CD4-positive, alpha-beta memory T cell (primary cell): ENCODE measurements at regions of chr1 and their contacts with region 1.

Region 1: DNA sequence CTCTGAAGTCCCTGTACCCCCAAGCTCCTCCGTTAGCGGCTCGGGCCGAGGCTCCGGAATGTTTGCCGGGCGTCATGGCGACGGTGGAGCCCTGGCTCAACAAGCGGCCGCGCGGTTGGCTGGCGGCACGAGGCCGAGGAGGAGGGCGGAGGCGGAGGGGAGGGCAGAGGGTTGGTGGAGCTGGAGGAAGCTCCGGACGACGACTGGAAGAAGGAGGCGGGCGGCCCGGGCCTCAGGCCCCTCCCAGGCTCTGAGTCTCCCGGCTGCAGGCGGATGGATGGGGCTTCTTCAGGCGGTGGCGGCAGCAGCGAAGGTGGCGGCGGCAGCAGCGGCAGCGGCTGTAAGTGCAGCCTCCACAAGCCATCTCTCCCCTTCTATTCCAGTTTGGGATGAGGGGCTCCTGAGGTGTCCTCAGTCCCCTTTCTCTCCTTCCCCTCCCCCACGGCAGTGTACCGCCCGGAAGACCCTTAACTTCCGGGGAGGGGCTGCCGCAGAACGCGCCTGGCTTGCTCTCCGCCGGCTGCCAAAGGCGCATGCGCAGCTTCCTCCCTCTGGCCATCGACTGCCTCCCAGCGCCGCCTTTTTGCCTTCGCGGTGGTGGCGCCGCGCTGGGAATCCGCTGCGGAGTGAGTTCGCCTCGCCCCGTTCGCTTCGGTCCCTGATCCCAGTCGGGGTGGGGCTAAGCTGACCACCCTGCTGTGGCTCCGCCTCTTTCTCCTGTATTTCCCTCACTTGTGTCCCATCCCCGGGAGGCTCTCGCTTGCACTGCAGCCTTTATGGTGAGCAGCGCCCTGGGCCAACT is at the starts of genes DNAI4 and MIER1:
- DNase-seq: peak; percentile 98 to 99 (median 98)
- H3K4me3 ChIP-seq: peak within 1 kb of the TSS; percentile 95 to 98
- H3K4me3 Mint-ChIP-seq: peak within 1 kb of the TSS; percentile 92 to 99 (median 96)
- H3K27ac ChIP-seq: peak within 1 kb of the TSS; percentile 95
- H3K27ac Mint-ChIP-seq: peak within 1 kb of the TSS; percentile 97 to 99 (median 98)
- H3K4me1 ChIP-seq: peaks cover 47% of the 10 kb centered on the region
- H3K4me1 Mint-ChIP-seq: peaks cover 26 to 63% (median 34%) of the 10 kb centered on the region in 4 donors
- H3K27me3 ChIP-seq: no peaks in the 10 kb centered on the region
- H3K27me3 Mint-ChIP-seq: peaks cover 0 to 1% of the 10 kb centered on the region in 2 donors
- total RNA-seq, gene DNAI4: 7.9 to 11.4 TPM
- total RNA-seq, gene MIER1: 77.0 to 81.3 TPM

Region 2: DNA sequence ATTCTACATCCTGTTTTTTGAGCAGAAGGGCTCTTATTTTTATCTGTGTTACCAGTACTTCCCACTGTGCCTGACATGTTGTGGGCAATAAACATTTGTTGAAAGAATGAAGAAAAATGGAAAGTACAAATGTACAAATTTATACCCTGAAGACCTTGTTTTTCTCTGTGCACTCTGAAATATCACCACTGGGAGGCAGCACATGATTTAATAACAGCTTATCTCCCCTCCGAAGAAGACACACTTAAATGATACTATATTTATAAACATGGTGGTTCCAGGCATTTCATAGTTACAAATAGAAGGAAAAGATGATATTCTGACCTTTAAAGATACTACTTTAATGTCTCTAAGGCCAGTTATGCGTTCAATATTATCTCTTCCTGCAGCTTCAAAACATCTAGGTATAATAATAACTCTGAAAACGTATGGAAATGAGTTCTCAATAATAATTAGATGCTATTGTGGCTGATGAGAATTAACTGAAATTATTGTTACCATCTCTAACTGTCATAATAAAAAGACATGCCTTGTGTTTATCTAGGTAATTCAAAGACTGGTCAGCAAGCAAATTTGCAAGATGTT is 159.9 kb before region 1 on chr1:
- CTCF ChIA-PET with region 1: interaction called, 7 read pairs
- POLR2A ChIA-PET with region 1: interaction called, 10 read pairs
- intact Hi-C with region 1: loop called (anchors 2 kb)
- DNase-seq: peak; percentile 53 to 59 (median 54)
- H3K4me3 ChIP-seq: no peak overlapping the region
- H3K4me3 Mint-ChIP-seq: no peak overlapping the region
- H3K27ac ChIP-seq: no peak overlapping the region
- H3K27ac Mint-ChIP-seq: no peak overlapping the region
- H3K4me1 ChIP-seq: peaks cover 13% of the 10 kb centered on the region
- H3K4me1 Mint-ChIP-seq: peaks cover 13 to 17% (median 15%) of the 10 kb centered on the region in 4 donors
- H3K27me3 ChIP-seq: no peaks in the 10 kb centered on the region
- H3K27me3 Mint-ChIP-seq: no peaks in the 10 kb centered on the region

Region 3: DNA sequence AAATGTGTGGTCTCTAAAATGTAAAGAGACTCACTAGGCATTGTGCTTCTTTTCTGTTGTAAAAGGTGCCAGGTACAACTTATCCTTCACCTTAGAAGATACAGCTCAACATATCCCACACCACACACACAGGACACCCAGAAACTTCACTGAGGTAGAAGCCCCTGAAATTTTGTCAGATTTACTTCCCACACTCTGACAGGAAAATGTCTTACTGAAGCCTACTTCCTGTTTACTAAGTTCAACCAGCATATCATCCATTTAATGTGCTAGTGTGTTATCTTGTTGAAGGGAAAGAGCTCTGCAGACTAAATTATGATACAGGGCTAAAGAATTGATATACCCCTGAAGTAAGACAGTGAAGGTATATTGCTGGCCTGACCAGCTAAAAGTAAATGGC is 84.0 kb before region 1 on chr1:
- CTCF ChIA-PET with region 1: no interaction called
- POLR2A ChIA-PET with region 1: interaction called, 13 read pairs
- intact Hi-C with region 1: no loop called
- DNase-seq: peak in 4 of 5 donors; percentile 3 to 10 (median 10)
- H3K4me3 ChIP-seq: no peak overlapping the region
- H3K4me3 Mint-ChIP-seq: peak overlapping the region in 7 of 8 donors; percentile 13 to 71 (median 57)
- H3K27ac ChIP-seq: no peak overlapping the region
- H3K27ac Mint-ChIP-seq: peak overlapping the region in 6 of 7 donors; percentile 33 to 90 (median 72)
- H3K4me1 ChIP-seq: peaks cover 11% of the 10 kb centered on the region
- H3K4me1 Mint-ChIP-seq: peaks cover 12 to 20% (median 15%) of the 10 kb centered on the region in 4 donors
- H3K27me3 ChIP-seq: no peaks in the 10 kb centered on the region
- H3K27me3 Mint-ChIP-seq: no peaks in the 10 kb centered on the region

Region 4: GRCh38 chr1:66890621-66891020 is 34.3 kb before region 1 on chr1:
- CTCF ChIA-PET with region 1: no interaction called
- POLR2A ChIA-PET with region 1: no interaction called
- intact Hi-C with region 1: no loop called
- DNase-seq: no peak
- H3K4me3 ChIP-seq: no peak overlapping the region
- H3K4me3 Mint-ChIP-seq: no peak overlapping the region
- H3K27ac ChIP-seq: no peak overlapping the region
- H3K27ac Mint-ChIP-seq: no peak overlapping the region
- H3K4me1 ChIP-seq: no peaks in the 10 kb centered on the region
- H3K4me1 Mint-ChIP-seq: no peaks in the 10 kb centered on the region
- H3K27me3 ChIP-seq: no peaks in the 10 kb centered on the region
- H3K27me3 Mint-ChIP-seq: peaks cover 0 to 2% of the 10 kb centered on the region in 2 donors

Region 5: DNA sequence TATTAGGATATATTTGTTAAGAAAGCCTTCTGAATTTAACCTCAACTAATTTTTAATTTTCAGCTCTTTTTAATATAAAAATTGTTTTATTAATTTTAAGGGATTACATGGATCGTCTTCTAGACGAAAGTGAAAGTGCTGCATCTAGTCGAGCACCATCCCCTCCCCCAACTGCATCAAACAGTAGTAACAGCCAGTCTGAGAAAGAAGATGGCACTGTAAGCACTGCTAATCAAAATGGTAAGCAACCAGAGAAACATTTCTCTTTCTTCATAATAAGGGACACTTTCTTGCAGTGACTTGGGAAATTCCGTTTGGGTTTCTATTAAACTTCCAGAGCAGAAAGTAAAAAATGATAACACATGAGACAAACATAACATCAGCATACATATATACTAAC is 56.7 kb after region 1 on chr1:
- CTCF ChIA-PET with region 1: interaction called, 3 read pairs
- POLR2A ChIA-PET with region 1: interaction called, 16 read pairs
- intact Hi-C with region 1: no loop called
- DNase-seq: peak; percentile 55 to 72 (median 67)
- H3K4me3 ChIP-seq: peak overlapping the region in 1 of 2 donors; percentile 9
- H3K4me3 Mint-ChIP-seq: peak overlapping the region; percentile 2 to 80 (median 72)
- H3K27ac ChIP-seq: peak overlapping the region; percentile 61
- H3K27ac Mint-ChIP-seq: peak overlapping the region; percentile 53 to 94 (median 77)
- H3K4me1 ChIP-seq: peaks cover 25% of the 10 kb centered on the region
- H3K4me1 Mint-ChIP-seq: peaks cover 20 to 37% (median 22%) of the 10 kb centered on the region in 4 donors
- H3K27me3 ChIP-seq: no peaks in the 10 kb centered on the region
- H3K27me3 Mint-ChIP-seq: no peaks in the 10 kb centered on the region

Region 6: GRCh38 chr1:67053785-67054772 is 129.1 kb after region 1 on chr1 and contains the start of gene SLC35D1:
- CTCF ChIA-PET with region 1: no interaction called
- POLR2A ChIA-PET with region 1: interaction called, 22 read pairs
- intact Hi-C with region 1: loop called (anchors 1 kb)
- DNase-seq: peak; percentile 68 to 82 (median 77)
- H3K4me3 ChIP-seq: peak within 1 kb of the TSS; percentile 73 to 88
- H3K4me3 Mint-ChIP-seq: peak within 1 kb of the TSS; percentile 93 to 96 (median 95)
- H3K27ac ChIP-seq: peak within 1 kb of the TSS; percentile 91
- H3K27ac Mint-ChIP-seq: peak within 1 kb of the TSS; percentile 66 to 98 (median 97)
- H3K4me1 ChIP-seq: peaks cover 25% of the 10 kb centered on the region
- H3K4me1 Mint-ChIP-seq: peaks cover 21 to 38% (median 28%) of the 10 kb centered on the region in 4 donors
- H3K27me3 ChIP-seq: no peaks in the 10 kb centered on the region
- H3K27me3 Mint-ChIP-seq: no peaks in the 10 kb centered on the region
- total RNA-seq, gene SLC35D1: 16.9 to 17.7 TPM

Region 7: GRCh38 chr1:67685067-67685557 is 760.2 kb after region 1 on chr1 and contains the start of gene GADD45A:
- CTCF ChIA-PET with region 1: no interaction called
- POLR2A ChIA-PET with region 1: interaction called, 19 read pairs
- intact Hi-C with region 1: loop called (anchors 2 kb)
- DNase-seq: peak; percentile 93 to 98 (median 95)
- H3K4me3 ChIP-seq: peak within 1 kb of the TSS; percentile 69 to 81
- H3K4me3 Mint-ChIP-seq: peak within 1 kb of the TSS; percentile 96 to 99 (median 98)
- H3K27ac ChIP-seq: peak within 1 kb of the TSS; percentile 60
- H3K27ac Mint-ChIP-seq: peak within 1 kb of the TSS; percentile 88 to 97 (median 96)
- H3K4me1 ChIP-seq: peaks cover 19% of the 10 kb centered on the region
- H3K4me1 Mint-ChIP-seq: peaks cover 11 to 24% (median 18%) of the 10 kb centered on the region in 4 donors
- H3K27me3 ChIP-seq: no peaks in the 10 kb centered on the region
- H3K27me3 Mint-ChIP-seq: no peaks in the 10 kb centered on the region
- total RNA-seq, gene GADD45A: 25.3 to 26.8 TPM